ENCODE measurements at regions of chr14 and their contacts with region 1.

Region 1: DNA sequence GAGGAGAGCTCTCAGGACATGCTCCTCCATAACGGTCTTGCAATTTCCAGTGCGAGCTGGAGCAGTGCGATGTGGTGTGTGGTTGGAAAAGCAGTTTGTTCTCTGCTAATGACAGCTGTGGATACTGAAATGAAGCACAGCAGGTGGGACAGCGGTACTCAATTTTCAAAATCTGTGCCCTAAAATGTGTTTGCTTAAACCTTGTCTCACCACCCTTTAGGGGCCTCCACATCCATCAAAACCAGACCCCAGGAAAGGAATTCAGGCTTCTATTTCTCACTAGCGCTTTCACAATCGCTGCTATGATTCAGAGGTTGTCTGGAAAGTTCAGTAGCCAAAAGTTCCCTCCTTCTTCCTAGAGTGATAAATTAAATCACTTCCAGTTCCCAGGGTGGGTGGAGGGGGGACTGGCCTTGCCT is 440.8 kb downstream of the EGLN3 start:
- DNase-seq: no peak
- ATAC-seq: no peak
- H3K4me3 ChIP-seq: no peak overlapping the region
- H3K27ac ChIP-seq: no peak overlapping the region
- H3K4me1 ChIP-seq: no peaks in the 10 kb centered on the region
- H3K27me3 ChIP-seq: peaks cover 0 to 2% of the 10 kb centered on the region in 2 experiments; a peak in 2 of 4 replicates
- CTCF ChIP-seq: no peak
- EP300 ChIP-seq: no peak
- POLR2A ChIP-seq: no peak
- RAD21 ChIP-seq: no peak

Region 2: DNA sequence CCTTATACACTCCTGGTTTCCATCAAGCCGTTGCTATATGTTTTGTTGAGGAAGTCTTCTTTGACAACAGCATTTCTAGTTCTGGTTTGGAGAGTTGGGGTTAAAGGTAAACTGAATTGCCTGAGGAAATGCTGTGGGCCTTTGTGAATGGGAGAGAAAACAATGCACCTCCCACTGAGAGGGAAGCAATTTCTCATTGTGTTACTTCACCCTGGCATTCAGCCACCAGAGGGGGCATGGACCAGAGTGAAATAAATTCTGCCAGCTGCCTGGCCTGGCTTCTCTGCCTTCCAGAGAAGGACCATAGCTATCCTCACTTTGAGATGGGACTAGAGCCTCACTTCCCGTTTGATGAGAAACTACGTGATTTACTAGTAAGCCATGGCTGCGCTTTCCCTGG is 34.4 kb before region 1 on chr14:
- CTCF ChIA-PET with region 1: interaction called, 36 read pairs
- POLR2A ChIA-PET with region 1: interaction called, 4 read pairs
- RAD21 ChIA-PET with region 1: interaction called, 34 read pairs
- SMC1A ChIA-PET with region 1: interaction called, 22 read pairs
- in situ Hi-C with region 1: no loop called
- intact Hi-C with region 1: no loop called
- DNase-seq: no peak
- ATAC-seq: peak; percentile 77
- H3K4me3 ChIP-seq: no peak overlapping the region
- H3K27ac ChIP-seq: no peak overlapping the region
- H3K4me1 ChIP-seq: no peaks in the 10 kb centered on the region
- H3K27me3 ChIP-seq: no peaks in the 10 kb centered on the region
- CTCF ChIP-seq: peak; percentile 40 to 56 (median 46); a peak in 5 of 6 replicates
- EP300 ChIP-seq: no peak
- POLR2A ChIP-seq: no peak
- RAD21 ChIP-seq: peak; percentile 35; the same call in 1 of the 2 replicates

Region 3: GRCh38 chr14:33499687-33500086 is 10.4 kb before region 1 on chr14:
- CTCF ChIA-PET with region 1: interaction called, 12 read pairs
- POLR2A ChIA-PET with region 1: interaction called, 8 read pairs
- RAD21 ChIA-PET with region 1: interaction called, 13 read pairs
- SMC1A ChIA-PET with region 1: interaction called, 120 read pairs
- in situ Hi-C with region 1: no loop called
- intact Hi-C with region 1: no loop called
- DNase-seq: no peak
- ATAC-seq: no peak
- H3K4me3 ChIP-seq: no peak overlapping the region
- H3K27ac ChIP-seq: no peak overlapping the region
- H3K4me1 ChIP-seq: no peaks in the 10 kb centered on the region
- H3K27me3 ChIP-seq: no peaks in the 10 kb centered on the region; a peak in 1 of 4 replicates
- CTCF ChIP-seq: no peak
- EP300 ChIP-seq: no peak
- POLR2A ChIP-seq: no peak
- RAD21 ChIP-seq: no peak

Region 4: DNA sequence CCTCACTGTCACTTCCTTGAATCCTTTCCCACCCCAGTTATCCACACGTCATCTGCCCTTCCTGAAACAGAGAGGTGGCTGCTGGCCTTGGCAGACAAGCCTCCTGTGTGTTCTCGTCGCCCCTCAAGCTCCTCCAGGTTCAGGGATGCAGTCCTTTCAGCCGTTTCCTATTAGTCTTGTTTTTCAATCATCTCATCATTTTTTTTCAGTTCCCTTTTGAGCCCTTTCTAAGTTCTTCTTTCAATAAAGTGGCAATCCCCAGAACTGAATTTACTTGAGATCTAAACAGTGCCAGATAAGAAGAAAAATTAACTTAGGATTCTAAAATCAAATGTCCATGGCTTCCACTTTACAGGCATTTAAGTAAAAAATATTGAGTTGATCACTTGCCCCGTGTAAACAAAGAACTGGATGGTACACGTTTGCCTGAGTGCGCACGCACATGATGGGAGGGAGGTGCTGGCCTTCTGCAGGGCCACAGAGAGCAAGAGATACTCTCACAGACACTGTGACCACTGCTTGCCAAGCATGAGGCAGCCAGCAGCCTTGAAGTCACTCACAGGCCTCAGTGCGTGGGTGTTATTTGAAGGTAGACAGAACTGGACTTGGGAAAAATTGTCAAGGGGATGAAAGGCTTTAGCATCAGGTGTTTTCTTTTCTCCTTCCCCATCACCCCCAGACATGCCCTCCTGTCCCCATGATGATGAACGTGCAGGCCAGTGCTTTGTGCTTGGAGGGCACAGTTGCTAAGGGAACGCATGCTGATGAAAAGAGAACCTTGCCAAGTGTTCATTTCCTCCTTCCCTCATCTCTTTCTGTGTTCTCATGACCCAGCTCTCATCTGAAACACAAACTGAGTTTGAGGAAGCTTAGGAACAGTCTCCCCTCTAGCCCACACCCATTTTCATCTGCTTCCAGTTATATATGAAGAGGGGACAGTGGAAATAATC is 32.5 kb after region 1 on chr14:
- CTCF ChIA-PET with region 1: interaction called, 22 read pairs
- POLR2A ChIA-PET with region 1: interaction called, 10 read pairs
- RAD21 ChIA-PET with region 1: interaction called, 50 read pairs
- SMC1A ChIA-PET with region 1: interaction called, 66 read pairs
- in situ Hi-C with region 1: no loop called
- intact Hi-C with region 1: no loop called
- DNase-seq: no peak
- ATAC-seq: peak; percentile 63
- H3K4me3 ChIP-seq: no peak overlapping the region
- H3K27ac ChIP-seq: no peak overlapping the region
- H3K4me1 ChIP-seq: peaks cover 5% of the 10 kb centered on the region; the same call in 1 of the 2 replicates
- H3K27me3 ChIP-seq: no peaks in the 10 kb centered on the region
- CTCF ChIP-seq: no peak
- EP300 ChIP-seq: no peak
- POLR2A ChIP-seq: no peak
- RAD21 ChIP-seq: no peak

Region 5: GRCh38 chr14:33564774-33565630 is 54.9 kb after region 1 on chr14:
- CTCF ChIA-PET with region 1: interaction called, 18 read pairs
- POLR2A ChIA-PET with region 1: interaction called, 69 read pairs
- RAD21 ChIA-PET with region 1: interaction called, 110 read pairs
- SMC1A ChIA-PET with region 1: interaction called, 145 read pairs
- in situ Hi-C with region 1: no loop called
- intact Hi-C with region 1: no loop called
- DNase-seq: peak; percentile 57
- ATAC-seq: peak; percentile 92
- H3K4me3 ChIP-seq: no peak overlapping the region
- H3K27ac ChIP-seq: no peak overlapping the region
- H3K4me1 ChIP-seq: no peaks in the 10 kb centered on the region
- H3K27me3 ChIP-seq: peaks cover 0 to 3% of the 10 kb centered on the region in 2 experiments; a peak in 1 of 4 replicates
- CTCF ChIP-seq: no peak
- EP300 ChIP-seq: peak in 1 of 2 experiments; percentile 70; a peak in 1 of 4 replicates
- POLR2A ChIP-seq: no peak
- RAD21 ChIP-seq: no peak

Region 6: GRCh38 chr14:33578461-33579216 is 68.6 kb after region 1 on chr14:
- CTCF ChIA-PET with region 1: interaction called, 18 read pairs
- POLR2A ChIA-PET with region 1: interaction called, 6 read pairs
- RAD21 ChIA-PET with region 1: interaction called, 83 read pairs
- SMC1A ChIA-PET with region 1: interaction called, 32 read pairs
- in situ Hi-C with region 1: no loop called
- intact Hi-C with region 1: no loop called
- DNase-seq: no peak
- ATAC-seq: no peak
- H3K4me3 ChIP-seq: no peak overlapping the region
- H3K27ac ChIP-seq: no peak overlapping the region
- H3K4me1 ChIP-seq: no peaks in the 10 kb centered on the region
- H3K27me3 ChIP-seq: no peaks in the 10 kb centered on the region
- CTCF ChIP-seq: no peak
- EP300 ChIP-seq: no peak
- POLR2A ChIP-seq: no peak
- RAD21 ChIP-seq: no peak

Region 7: GRCh38 chr14:33657476-33657875 is 147.4 kb after region 1 on chr14:
- CTCF ChIA-PET with region 1: interaction called, 9 read pairs
- POLR2A ChIA-PET with region 1: interaction called, 3 read pairs
- RAD21 ChIA-PET with region 1: interaction called, 11 read pairs
- SMC1A ChIA-PET with region 1: interaction called, 5 read pairs
- in situ Hi-C with region 1: no loop called
- intact Hi-C with region 1: no loop called
- DNase-seq: no peak
- ATAC-seq: no peak
- H3K4me3 ChIP-seq: no peak overlapping the region
- H3K27ac ChIP-seq: no peak overlapping the region
- H3K4me1 ChIP-seq: no peaks in the 10 kb centered on the region
- H3K27me3 ChIP-seq: no peaks in the 10 kb centered on the region
- CTCF ChIP-seq: no peak
- EP300 ChIP-seq: no peak
- POLR2A ChIP-seq: no peak
- RAD21 ChIP-seq: no peak

Region 8: DNA sequence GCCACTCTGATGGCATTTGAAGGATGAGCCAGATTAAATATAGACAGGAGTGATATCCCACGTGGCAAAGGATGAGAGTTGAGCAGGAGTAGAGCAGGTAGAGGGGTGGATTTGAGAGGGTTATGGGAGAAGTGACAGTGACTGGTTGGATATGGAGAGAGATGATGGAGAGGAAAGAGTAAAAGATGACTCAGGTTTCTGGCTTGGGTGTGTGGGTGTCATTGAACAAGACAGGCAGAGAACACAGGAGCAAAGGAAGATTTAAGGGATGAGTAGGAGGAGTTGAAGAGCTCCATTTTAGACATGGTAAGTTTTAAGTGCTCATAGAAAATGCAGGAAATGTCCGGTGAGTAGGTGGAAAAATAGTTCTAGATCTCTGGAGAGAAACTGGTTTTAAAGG is 303.9 kb after region 1 on chr14:
- CTCF ChIA-PET with region 1: no interaction called
- POLR2A ChIA-PET with region 1: no interaction called
- RAD21 ChIA-PET with region 1: no interaction called
- SMC1A ChIA-PET with region 1: no interaction called
- in situ Hi-C with region 1: no loop called
- intact Hi-C with region 1: no loop called
- DNase-seq: no peak
- ATAC-seq: no peak
- H3K4me3 ChIP-seq: no peak overlapping the region
- H3K27ac ChIP-seq: no peak overlapping the region
- H3K4me1 ChIP-seq: no peaks in the 10 kb centered on the region
- H3K27me3 ChIP-seq: peaks cover 0 to 3% of the 10 kb centered on the region in 2 experiments; a peak in 1 of 4 replicates
- CTCF ChIP-seq: no peak
- EP300 ChIP-seq: no peak
- POLR2A ChIP-seq: no peak
- RAD21 ChIP-seq: no peak

Region 9: DNA sequence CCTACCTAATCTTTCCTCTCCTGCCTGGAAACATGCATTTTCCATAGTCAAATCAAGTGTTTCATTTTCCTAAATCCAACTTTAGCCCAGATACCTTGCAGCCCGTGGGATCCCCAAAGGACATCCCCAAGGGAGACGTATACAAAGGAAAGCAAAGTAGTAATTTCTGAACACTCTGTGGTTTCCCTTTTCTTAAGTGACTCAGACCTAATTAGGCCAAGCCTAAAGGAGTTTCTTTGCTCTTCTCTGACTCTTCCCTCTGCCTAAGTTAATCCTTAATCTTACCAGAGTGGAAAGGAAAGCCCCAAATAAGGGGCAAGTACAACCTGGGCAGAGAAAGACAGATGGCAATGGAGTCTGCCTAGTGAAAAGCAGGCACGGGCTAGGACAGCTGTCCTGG is 701.7 kb after region 1 on chr14:
- CTCF ChIA-PET with region 1: no interaction called
- POLR2A ChIA-PET with region 1: no interaction called
- RAD21 ChIA-PET with region 1: no interaction called
- SMC1A ChIA-PET with region 1: no interaction called
- in situ Hi-C with region 1: no loop called
- intact Hi-C with region 1: no loop called
- DNase-seq: peak; percentile 45
- ATAC-seq: peak; percentile 91
- H3K4me3 ChIP-seq: no peak overlapping the region
- H3K27ac ChIP-seq: no peak overlapping the region
- H3K4me1 ChIP-seq: no peaks in the 10 kb centered on the region; the same call in 1 of the 2 replicates
- H3K27me3 ChIP-seq: no peaks in the 10 kb centered on the region; a peak in 1 of 4 replicates
- CTCF ChIP-seq: no peak
- EP300 ChIP-seq: peak; percentile 30 to 74; a peak in 2 of 4 replicates
- POLR2A ChIP-seq: no peak
- RAD21 ChIP-seq: no peak